ENCODE measurements at regions of chr12 and their contacts with region 1.

Region 1: DNA sequence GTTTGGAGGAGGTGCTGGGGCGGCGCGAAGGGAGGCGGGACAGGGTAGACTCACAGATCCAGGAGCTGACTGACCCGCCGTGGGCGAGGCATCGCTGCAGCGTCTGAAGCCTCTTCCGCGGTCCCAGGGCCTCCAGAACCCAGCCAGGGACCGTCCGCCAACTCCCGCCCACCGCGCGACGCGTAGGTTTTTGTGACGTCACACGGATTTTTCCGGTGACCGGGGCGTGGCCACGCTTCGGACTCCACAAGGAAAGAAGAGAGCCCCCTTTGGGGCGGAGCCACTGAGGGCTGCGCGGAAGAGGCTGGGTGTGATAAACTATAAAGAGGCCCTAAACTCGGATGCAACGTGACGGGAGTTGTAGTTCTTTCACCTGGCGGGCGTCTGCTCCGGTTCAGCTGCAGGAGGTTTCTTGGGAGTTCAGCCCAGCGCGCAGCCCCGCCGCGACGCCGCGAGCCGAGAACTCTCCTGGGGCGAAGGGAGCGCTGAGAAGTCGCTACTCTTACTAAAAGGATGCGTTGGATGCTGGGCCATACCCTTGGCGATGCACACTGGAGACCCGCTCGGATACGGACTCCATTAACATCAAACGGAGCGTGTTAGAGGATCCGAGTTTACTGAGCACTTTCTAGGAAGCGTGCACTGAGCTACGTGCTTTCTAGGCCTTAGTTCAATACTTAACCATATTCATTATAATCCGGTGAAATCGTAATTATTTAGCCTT is at the start of gene AMN1:
- DNase-seq: peak; percentile 98 to 100
- ATAC-seq: peak; percentile 94 to 96
- H3K4me3 ChIP-seq: peak within 1 kb of the TSS; percentile 67
- H3K27ac ChIP-seq: peak within 1 kb of the TSS; percentile 87 to 94
- H3K4me1 ChIP-seq: peaks cover 23% of the 10 kb centered on the region
- CTCF ChIP-seq: no peak
- EP300 ChIP-seq: no peak
- POLR2A ChIP-seq: peak; percentile 92
- RAD21 ChIP-seq: 0 out of 5 replicates have a peak, but pooled peaks of 1 of the 2 experiments have one; percentile 21
- polyA plus RNA-seq, gene AMN1: 50.9 and 53.3 TPM in 2 replicates

Region 2: DNA sequence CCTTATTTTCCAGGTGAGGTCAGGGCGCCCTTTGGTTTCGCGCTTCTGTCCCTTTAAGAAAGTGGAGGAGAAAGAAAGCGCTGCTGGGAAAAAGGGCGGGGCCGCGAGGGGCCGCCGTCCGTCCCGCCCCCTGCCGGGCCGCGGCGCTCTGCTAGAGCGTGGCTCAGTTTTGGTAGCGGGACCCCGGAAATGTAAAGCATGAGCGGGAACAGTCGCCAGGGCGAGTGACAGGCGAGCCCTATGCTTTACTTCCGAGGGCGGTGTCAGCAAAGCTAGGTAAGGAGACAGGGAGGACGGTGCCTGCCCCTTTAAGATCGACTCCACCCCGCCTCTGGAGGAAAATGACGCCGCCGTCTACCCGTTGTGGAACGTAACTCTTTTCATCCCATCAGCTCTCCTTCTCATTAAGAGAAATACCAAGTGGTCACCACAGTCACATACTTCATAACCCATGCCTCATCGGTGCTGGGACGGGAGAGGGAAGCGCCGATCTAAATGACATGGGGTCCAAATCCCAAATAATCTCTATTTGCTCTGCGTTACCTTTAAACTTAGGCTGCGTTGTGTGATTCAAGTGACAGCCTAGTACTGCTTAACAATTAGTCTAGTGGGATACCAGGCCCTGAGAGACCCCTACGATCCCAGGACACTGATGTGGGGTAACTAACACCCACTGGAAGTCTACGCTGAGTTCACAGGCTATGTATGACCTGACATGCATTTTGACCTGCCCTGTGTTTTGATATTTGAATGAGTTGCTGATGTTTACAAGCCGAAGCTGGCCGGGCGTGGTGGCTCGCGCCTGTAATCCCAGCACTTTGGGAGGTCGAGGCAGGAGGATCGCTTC is 69.8 kb before region 1 on chr12 and contains the start of gene ETFBKMT:
- CTCF ChIA-PET with region 1: no interaction called
- POLR2A ChIA-PET with region 1: interaction called, 11 read pairs
- DNase-seq: peak; percentile 85 to 96
- ATAC-seq: peak; percentile 97 to 99
- H3K4me3 ChIP-seq: peak within 1 kb of the TSS; percentile 62
- H3K27ac ChIP-seq: peak within 1 kb of the TSS; percentile 81 to 87
- H3K4me1 ChIP-seq: peaks cover 7% of the 10 kb centered on the region; the same call in 1 of the 3 replicates
- CTCF ChIP-seq: no peak
- EP300 ChIP-seq: no peak
- POLR2A ChIP-seq: 0 out of 2 replicates have a peak, but pooled peaks have one; percentile 27
- RAD21 ChIP-seq: peak in 1 of 2 experiments; percentile 14; a peak in 1 of 5 replicates
- polyA plus RNA-seq, gene ETFBKMT: 1.4 and 1.7 TPM in 2 replicates

Region 3: DNA sequence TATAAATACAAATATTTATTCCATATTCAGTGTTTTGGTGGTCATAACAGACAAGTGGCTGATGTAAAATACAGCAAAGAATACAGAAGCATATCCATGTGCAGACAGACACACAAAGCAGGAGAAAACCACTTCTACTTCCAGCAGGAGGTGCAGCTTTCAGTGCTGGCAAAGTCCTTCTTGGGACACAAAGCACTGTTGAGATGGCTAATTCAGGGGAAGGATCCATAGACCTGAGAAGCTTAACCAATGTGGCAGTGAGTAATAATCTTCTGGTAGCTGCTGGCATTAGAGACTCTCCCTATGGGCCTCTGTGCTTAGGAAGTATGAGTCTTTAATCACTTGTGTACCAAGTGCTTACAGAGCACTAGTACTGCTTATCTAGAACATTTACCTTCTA is 27.0 kb before region 1 on chr12:
- CTCF ChIA-PET with region 1: interaction called, 3 read pairs
- POLR2A ChIA-PET with region 1: interaction called, 11 read pairs
- DNase-seq: peak in 1 of 2 experiments; percentile 60
- ATAC-seq: peak in 1 of 2 experiments; percentile 65; a peak in 4 of 6 replicates
- H3K4me3 ChIP-seq: no peak overlapping the region
- H3K27ac ChIP-seq: no peak overlapping the region
- H3K4me1 ChIP-seq: no peaks in the 10 kb centered on the region
- CTCF ChIP-seq: peak; percentile 22; the same call in 1 of the 3 replicates
- EP300 ChIP-seq: no peak
- POLR2A ChIP-seq: no peak
- RAD21 ChIP-seq: peak; percentile 19 to 38; a peak in 2 of 5 replicates

Region 4: GRCh38 chr12:31749024-31749704 is 20.1 kb after region 1 on chr12:
- CTCF ChIA-PET with region 1: interaction called, 6 read pairs
- POLR2A ChIA-PET with region 1: interaction called, 29 read pairs
- DNase-seq: peak; percentile 98 to 100
- ATAC-seq: peak; percentile 96 to 99
- H3K4me3 ChIP-seq: no peak overlapping the region
- H3K27ac ChIP-seq: peak overlapping the region; percentile 81 to 90
- H3K4me1 ChIP-seq: peaks cover 63% of the 10 kb centered on the region
- CTCF ChIP-seq: no peak
- EP300 ChIP-seq: peak; percentile 98
- POLR2A ChIP-seq: no peak
- RAD21 ChIP-seq: peak; percentile 52 to 76; a peak in 4 of 5 replicates

Region 5: DNA sequence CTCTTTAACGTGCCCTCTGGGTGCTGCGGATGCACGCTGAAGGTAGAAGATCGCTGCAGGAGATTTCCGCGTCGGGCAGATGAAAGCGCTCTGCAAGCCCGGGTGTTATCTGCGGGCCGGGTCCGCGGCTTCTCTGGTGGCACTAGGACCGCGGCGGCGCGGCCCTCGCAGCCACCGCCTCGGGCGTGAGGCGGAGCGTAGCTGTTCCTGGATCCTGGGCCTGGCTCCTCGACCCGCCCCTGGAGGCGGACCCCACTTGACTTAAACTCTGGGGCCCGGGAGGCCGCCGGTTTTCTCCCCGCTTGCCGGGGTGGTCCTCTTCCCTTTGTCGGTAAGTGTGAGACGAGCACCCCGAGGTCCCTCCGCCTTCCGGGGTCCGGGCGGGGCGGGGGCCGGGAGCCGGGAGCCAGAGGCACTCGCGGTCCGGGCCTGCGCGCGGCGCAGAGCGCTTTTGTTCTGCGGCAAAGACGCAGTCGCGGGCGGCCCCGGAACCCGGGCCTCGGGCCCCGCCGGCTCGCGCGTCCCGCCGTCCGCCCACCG is 230.2 kb after region 1 on chr12 and contains the start of gene RESF1:
- CTCF ChIA-PET with region 1: no interaction called
- POLR2A ChIA-PET with region 1: interaction called, 12 read pairs
- DNase-seq: peak; percentile 81 to 93
- ATAC-seq: peak; percentile 97 to 98
- H3K4me3 ChIP-seq: peak within 1 kb of the TSS; percentile 95
- H3K27ac ChIP-seq: peak within 1 kb of the TSS; percentile 94 to 98
- H3K4me1 ChIP-seq: peaks cover 26% of the 10 kb centered on the region
- CTCF ChIP-seq: no peak
- EP300 ChIP-seq: no peak
- POLR2A ChIP-seq: peak; percentile 62
- RAD21 ChIP-seq: peak in 1 of 2 experiments; percentile 16; a peak in 1 of 5 replicates
- polyA plus RNA-seq, gene RESF1: 40.6 and 45.4 TPM in 2 replicates

Measured in A549 (cell line).